ENCODE measurements at regions of chr3 and their contacts with region 1.

Region 1: DNA sequence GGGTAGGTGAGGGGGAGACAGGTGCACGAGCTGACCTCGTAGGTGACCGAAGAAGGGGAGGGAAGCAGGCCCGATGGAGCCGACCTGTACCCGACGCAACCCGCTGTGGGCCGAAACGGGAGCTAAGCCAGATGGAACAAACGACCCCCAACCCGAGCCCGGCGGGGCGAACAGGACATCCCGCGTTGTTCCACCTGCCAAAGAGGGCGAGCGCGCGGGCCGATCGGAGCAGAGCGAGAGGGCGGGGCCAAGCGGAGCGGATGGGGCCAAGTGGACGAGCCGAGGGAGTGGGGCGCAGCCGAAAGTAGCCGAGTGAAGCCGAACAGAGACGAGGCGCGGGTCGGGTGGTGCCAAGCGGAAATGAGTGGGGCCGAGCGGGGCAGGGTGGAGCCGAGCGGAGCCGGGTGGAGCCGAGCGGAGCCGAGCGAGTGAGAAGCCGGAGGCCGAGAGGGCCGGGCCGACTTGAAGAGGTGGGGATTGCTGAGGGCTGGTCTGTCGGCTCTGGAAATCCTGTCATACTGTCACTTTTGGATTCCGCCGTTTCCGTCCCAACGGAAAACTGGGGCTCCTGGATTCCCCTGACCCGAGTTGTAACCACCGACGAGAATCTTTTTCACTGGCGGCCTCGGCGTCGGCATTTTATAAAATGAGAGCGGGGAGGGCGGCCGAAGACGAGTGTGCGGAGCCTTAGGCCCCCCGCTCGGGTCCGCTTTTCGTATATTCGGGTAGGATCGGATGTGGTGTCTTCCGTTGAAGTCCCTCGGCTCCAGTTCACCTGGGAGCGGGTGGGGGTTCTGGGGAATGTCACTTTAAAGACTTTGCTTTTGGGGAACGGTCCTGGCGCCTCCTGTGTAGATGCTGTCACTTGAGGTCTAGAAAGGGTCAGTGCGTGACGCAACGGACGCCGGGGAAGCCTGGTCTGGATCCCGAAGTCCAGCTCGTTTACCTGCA is 15.6 kb upstream of the WNT7A start:
- DNase-seq: peak; percentile 90 to 97 (median 94)
- ATAC-seq: peak; percentile 95
- H3K4me3 ChIP-seq: peak overlapping the region; percentile 72
- H3K4me3 Mint-ChIP-seq: peak overlapping the region; percentile 83
- H3K27ac ChIP-seq: peak overlapping the region; percentile 58 to 65
- H3K27ac Mint-ChIP-seq: peak overlapping the region; percentile 37
- H3K4me1 ChIP-seq: peaks cover 48% of the 10 kb centered on the region
- H3K4me1 Mint-ChIP-seq: peaks cover 43% of the 10 kb centered on the region
- H3K27me3 ChIP-seq: no peaks in the 10 kb centered on the region
- H3K27me3 Mint-ChIP-seq: no peaks in the 10 kb centered on the region
- CTCF ChIP-seq: no peak

Region 2: DNA sequence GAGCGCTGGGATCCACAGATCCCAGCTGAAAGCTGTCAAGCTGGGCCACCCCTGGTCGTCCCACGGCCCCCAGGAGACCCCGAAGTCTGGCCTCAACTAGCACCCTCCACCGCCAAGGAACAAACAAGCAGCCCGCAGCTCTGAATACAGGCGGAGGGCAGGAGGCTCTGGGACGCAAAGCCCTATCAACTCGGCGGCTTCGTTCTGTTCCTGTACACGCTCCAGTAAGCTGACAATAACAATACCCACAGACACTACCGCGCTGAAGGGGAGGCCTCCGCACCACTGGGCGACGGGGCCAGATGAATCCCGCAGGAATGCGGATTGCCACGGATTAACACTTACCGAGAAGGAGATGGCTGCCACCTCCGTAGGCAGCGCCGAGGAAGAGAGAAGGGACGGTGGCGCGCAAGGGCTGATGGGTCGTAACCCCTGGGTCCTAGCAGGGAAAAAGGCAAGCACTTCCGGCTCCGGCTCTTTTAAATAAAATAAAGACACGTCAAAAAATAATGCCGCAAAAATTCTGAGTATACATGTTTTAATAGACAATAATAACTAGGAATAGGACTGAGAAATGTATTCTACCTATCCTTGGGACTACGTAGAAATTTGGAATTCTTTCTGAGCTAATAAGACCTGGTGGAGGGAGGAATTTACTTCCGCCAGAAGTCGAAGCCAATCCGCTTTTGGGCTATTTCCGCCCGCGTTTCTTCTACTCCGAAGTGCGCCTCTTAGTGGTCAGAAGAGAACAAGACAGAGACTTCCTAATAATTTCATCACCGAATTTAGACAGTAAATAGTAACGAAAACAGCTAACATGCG is 1054.1 kb before region 1 on chr3 and contains the start of gene RPL32:
- CTCF ChIA-PET with region 1: no interaction called
- POLR2A ChIA-PET with region 1: no interaction called
- intact Hi-C with region 1: loop called in 1 of 2 experiments (anchors 10 kb)
- DNase-seq: peak; percentile 76 to 96 (median 82)
- ATAC-seq: peak; percentile 91
- H3K4me3 ChIP-seq: peak within 1 kb of the TSS; percentile 86
- H3K4me3 Mint-ChIP-seq: peak within 1 kb of the TSS; percentile 93
- H3K27ac ChIP-seq: peak within 1 kb of the TSS; percentile 90 to 94
- H3K27ac Mint-ChIP-seq: peak within 1 kb of the TSS; percentile 99
- H3K4me1 ChIP-seq: peaks cover 39% of the 10 kb centered on the region
- H3K4me1 Mint-ChIP-seq: peaks cover 55% of the 10 kb centered on the region
- H3K27me3 ChIP-seq: no peaks in the 10 kb centered on the region
- H3K27me3 Mint-ChIP-seq: no peaks in the 10 kb centered on the region
- CTCF ChIP-seq: peak; percentile 74
- total RNA-seq, gene RPL32: 4,308 to 4,667 TPM

Region 3: GRCh38 chr3:13866041-13866965 is 29.1 kb before region 1 on chr3:
- CTCF ChIA-PET with region 1: no interaction called
- POLR2A ChIA-PET with region 1: interaction called, 15 read pairs
- intact Hi-C with region 1: no loop called
- DNase-seq: peak; percentile 44 to 90 (median 61)
- ATAC-seq: peak; percentile 91
- H3K4me3 ChIP-seq: peak overlapping the region; percentile 36
- H3K4me3 Mint-ChIP-seq: peak overlapping the region; percentile 68
- H3K27ac ChIP-seq: peak overlapping the region; percentile 71 to 90
- H3K27ac Mint-ChIP-seq: peak overlapping the region; percentile 94
- H3K4me1 ChIP-seq: peaks cover 63% of the 10 kb centered on the region
- H3K4me1 Mint-ChIP-seq: peaks cover 63% of the 10 kb centered on the region
- H3K27me3 ChIP-seq: no peaks in the 10 kb centered on the region
- H3K27me3 Mint-ChIP-seq: no peaks in the 10 kb centered on the region
- CTCF ChIP-seq: no peak

Region 4: GRCh38 chr3:14144423-14145075 is 249.1 kb after region 1 on chr3:
- CTCF ChIA-PET with region 1: interaction called, 15 read pairs
- POLR2A ChIA-PET with region 1: interaction called, 6 read pairs
- intact Hi-C with region 1: no loop called
- DNase-seq: peak; percentile 38 to 97 (median 66)
- ATAC-seq: peak; percentile 65
- H3K4me3 ChIP-seq: peak overlapping the region; percentile 26
- H3K4me3 Mint-ChIP-seq: peak overlapping the region; percentile 66
- H3K27ac ChIP-seq: peak overlapping the region; percentile 93 to 98
- H3K27ac Mint-ChIP-seq: peak overlapping the region; percentile 96
- H3K4me1 ChIP-seq: peaks cover 67% of the 10 kb centered on the region
- H3K4me1 Mint-ChIP-seq: peaks cover 59% of the 10 kb centered on the region
- H3K27me3 ChIP-seq: no peaks in the 10 kb centered on the region
- H3K27me3 Mint-ChIP-seq: no peaks in the 10 kb centered on the region
- CTCF ChIP-seq: no peak

Region 5: GRCh38 chr3:14261229-14261628 is 365.8 kb after region 1 on chr3:
- CTCF ChIA-PET with region 1: interaction called, 3 read pairs
- POLR2A ChIA-PET with region 1: no interaction called
- intact Hi-C with region 1: loop called (anchors 2 kb)
- DNase-seq: peak; percentile 55 to 86 (median 72)
- ATAC-seq: peak; percentile 61
- H3K4me3 ChIP-seq: no peak overlapping the region
- H3K4me3 Mint-ChIP-seq: no peak overlapping the region
- H3K27ac ChIP-seq: no peak overlapping the region
- H3K27ac Mint-ChIP-seq: no peak overlapping the region
- H3K4me1 ChIP-seq: peaks cover 3% of the 10 kb centered on the region
- H3K4me1 Mint-ChIP-seq: no peaks in the 10 kb centered on the region
- H3K27me3 ChIP-seq: no peaks in the 10 kb centered on the region
- H3K27me3 Mint-ChIP-seq: no peaks in the 10 kb centered on the region
- CTCF ChIP-seq: peak; percentile 100

Region 6: DNA sequence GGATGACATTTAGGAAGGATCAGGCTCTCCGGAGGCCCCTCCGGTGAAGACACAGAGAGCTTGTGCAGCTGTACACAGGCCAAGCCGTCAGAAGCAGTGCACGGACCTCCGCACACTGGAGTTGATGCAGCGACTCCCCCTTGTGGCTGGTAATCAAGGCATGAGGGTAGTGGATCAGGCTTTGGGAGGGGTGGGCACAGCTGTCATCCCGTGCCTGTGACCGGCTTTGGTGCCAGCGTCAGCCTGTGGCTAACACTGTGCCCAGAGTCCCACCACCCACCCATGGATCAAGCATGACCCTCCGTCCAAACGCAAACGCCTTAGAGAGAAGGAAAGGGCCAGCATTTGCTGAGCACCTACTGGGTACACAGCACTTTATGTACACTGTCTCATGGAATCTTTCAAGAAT is 652.9 kb after region 1 on chr3:
- CTCF ChIA-PET with region 1: interaction called, 3 read pairs
- POLR2A ChIA-PET with region 1: no interaction called
- intact Hi-C with region 1: loop called in 1 of 2 experiments (anchors 2 kb)
- DNase-seq: peak in 9 of 14 experiments; percentile 6 to 59 (median 31)
- ATAC-seq: peak; percentile 41
- H3K4me3 ChIP-seq: no peak overlapping the region
- H3K4me3 Mint-ChIP-seq: no peak overlapping the region
- H3K27ac ChIP-seq: no peak overlapping the region
- H3K27ac Mint-ChIP-seq: no peak overlapping the region
- H3K4me1 ChIP-seq: no peaks in the 10 kb centered on the region
- H3K4me1 Mint-ChIP-seq: no peaks in the 10 kb centered on the region
- H3K27me3 ChIP-seq: peaks cover 2 to 6% of the 10 kb centered on the region in 2 experiments
- H3K27me3 Mint-ChIP-seq: peaks cover 54% of the 10 kb centered on the region
- CTCF ChIP-seq: peak; percentile 56

Region 7: DNA sequence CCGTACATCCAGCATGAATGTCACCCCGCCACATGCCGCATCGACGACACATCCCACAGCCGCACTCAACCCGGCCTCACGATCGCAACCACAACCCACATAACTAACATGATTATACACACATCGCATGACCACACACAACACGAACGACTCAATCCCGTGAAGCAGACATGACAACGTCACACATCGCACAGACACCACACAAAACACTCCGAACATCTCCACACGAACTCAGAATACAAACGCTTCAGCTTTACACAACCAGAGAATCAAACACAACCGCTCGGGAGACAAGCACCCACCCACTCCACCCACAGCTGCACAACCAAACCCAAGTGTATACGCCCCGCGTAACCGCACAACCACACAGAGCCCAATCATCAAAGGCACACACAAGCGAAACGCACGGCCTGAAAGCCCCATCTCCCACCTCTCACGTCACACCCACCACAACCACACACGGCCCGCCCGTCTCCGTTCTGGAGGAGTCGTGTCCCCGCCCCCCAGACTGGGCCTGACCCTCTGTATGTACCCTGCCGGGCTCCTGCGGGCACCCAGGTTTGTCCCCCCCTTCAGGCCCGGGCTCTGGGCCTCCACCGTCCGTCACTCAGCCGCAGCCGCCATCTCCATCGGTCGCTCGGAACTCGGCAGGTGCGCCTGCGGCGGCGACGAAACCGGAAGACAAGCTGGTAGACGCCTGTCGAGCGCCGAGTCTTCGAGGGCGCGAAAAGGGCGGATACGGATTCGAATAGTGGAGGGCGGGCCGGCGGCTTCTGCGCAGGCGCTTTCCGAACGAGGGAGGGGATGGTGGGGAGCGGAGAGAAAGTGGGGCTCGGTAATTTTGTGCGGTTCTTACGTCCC is 1203.3 kb after region 1 on chr3 and contains the start of gene RBSN:
- CTCF ChIA-PET with region 1: no interaction called
- POLR2A ChIA-PET with region 1: no interaction called
- intact Hi-C with region 1: loop called in 1 of 2 experiments (anchors 10 kb)
- DNase-seq: peak; percentile 90 to 98 (median 94)
- ATAC-seq: peak; percentile 72
- H3K4me3 ChIP-seq: peak within 1 kb of the TSS; percentile 92
- H3K4me3 Mint-ChIP-seq: peak within 1 kb of the TSS; percentile 96
- H3K27ac ChIP-seq: peak within 1 kb of the TSS; percentile 96 to 98
- H3K27ac Mint-ChIP-seq: peak within 1 kb of the TSS; percentile 97
- H3K4me1 ChIP-seq: peaks cover 33% of the 10 kb centered on the region
- H3K4me1 Mint-ChIP-seq: peaks cover 36% of the 10 kb centered on the region
- H3K27me3 ChIP-seq: no peaks in the 10 kb centered on the region
- H3K27me3 Mint-ChIP-seq: peaks cover 5% of the 10 kb centered on the region
- CTCF ChIP-seq: no peak
- total RNA-seq, gene RBSN: 57.2 to 57.9 TPM